ENCODE measurements at regions of chr5 and their contacts with region 1.

Region 1: DNA sequence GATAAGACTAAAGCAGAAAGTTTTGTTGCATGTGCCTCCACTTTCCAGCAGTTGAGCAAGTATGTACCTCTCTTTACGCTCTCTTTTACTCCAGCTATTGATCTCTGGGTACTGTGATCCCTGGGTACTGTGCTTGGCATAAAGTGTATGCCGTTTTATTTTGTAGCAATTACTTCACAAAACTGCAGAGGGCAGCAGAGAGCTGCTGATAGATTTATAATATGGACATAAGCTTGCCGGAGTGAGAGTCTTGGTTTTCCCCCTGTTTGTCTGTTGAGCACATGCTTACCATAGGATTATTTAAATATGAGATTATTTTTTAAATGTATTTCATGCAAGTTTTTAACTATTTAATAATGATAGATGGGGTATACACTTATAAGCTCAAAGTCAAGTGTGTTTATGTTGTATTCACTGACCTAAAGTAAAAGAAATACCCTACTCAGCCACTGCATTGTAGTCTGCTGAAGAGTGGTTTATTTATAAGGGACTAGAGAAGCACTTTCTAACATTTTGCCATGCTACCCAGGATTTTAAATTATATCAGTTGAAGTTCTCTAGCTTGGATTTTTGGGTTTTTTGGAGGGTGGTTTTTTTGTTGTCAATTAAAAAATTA is 13.0 kb downstream of the TTC1 start:
- DNase-seq: peak in 4 of 5 donors; percentile 31 to 65 (median 37)
- H3K4me3 ChIP-seq: no peak overlapping the region
- H3K27ac ChIP-seq: no peak overlapping the region
- H3K4me1 ChIP-seq: peaks cover 1% of the 10 kb centered on the region
- H3K27me3 ChIP-seq: no peaks in the 10 kb centered on the region
- CTCF ChIP-seq: peak; percentile 55 to 81 (median 72)
- EP300 ChIP-seq: no peak
- POLR2A ChIP-seq: no peak

Region 2: DNA sequence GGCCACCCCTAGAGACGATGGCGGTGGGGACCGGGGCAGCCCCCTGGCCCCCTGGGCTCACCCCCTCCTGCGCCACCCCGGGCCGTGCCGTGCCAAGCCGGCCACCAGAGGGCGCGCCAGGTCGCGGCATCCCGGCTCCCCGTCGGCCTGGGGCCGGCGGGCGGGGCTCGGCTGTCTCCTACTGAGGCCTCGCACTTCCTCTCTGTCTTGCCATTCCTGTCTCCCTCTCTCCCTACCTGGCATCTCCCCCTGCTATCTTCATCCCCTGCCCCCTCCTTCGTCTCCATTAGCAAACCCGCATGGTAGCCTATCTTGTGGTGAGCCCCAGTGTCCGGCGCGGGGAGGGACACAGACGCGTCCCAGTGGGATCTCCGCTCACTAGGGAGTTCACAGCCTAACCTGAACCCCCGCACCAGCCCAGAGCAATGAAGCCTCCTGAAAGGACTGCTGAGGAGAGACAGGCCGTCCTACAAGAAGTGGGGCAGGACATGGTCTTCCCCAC is 177.5 kb after region 1 on chr5:
- intact Hi-C with region 1: loop called in 3 of 4 experiments (anchors 5 to 10 kb)
- DNase-seq: peak; percentile 68 to 87 (median 80)
- H3K4me3 ChIP-seq: peak overlapping the region; percentile 28
- H3K27ac ChIP-seq: no peak overlapping the region
- H3K4me1 ChIP-seq: peaks cover 1% of the 10 kb centered on the region
- H3K27me3 ChIP-seq: no peaks in the 10 kb centered on the region
- CTCF ChIP-seq: peak; percentile 83 to 95 (median 93)
- EP300 ChIP-seq: no peak
- POLR2A ChIP-seq: no peak

Region 3: DNA sequence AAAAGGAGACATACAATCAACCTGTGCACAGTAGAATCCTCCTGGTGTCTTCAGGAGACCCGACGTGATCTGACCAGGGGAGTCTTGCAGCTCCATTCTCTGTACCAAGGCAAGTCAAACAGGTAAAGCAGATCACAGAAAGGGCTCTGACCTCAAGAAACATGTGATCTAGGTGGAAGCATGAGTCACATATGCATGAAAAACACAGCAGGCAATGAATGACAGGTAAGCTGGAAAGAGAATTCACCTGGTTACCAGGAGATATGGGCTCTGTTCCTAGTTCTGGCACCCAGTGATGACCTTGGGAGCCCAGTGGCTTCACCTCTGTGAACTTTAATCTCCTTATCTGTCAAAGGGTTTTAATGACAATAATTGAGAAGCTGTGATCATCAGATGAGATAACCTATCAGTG is 188.0 kb after region 1 on chr5:
- intact Hi-C with region 1: loop called in 1 of 4 experiments (anchors 10 kb)
- DNase-seq: no peak
- H3K4me3 ChIP-seq: no peak overlapping the region
- H3K27ac ChIP-seq: no peak overlapping the region
- H3K4me1 ChIP-seq: no peaks in the 10 kb centered on the region
- H3K27me3 ChIP-seq: no peaks in the 10 kb centered on the region
- CTCF ChIP-seq: no peak
- EP300 ChIP-seq: no peak
- POLR2A ChIP-seq: no peak

Region 4: GRCh38 chr5:160342403-160342941 is 320.5 kb after region 1 on chr5:
- intact Hi-C with region 1: loop called (anchors 2 to 5 kb)
- DNase-seq: peak; percentile 38 to 64 (median 49)
- H3K4me3 ChIP-seq: no peak overlapping the region
- H3K27ac ChIP-seq: peak overlapping the region in 1 of 2 donors; percentile 79
- H3K4me1 ChIP-seq: peaks cover 16% of the 10 kb centered on the region
- H3K27me3 ChIP-seq: no peaks in the 10 kb centered on the region
- CTCF ChIP-seq: no peak
- EP300 ChIP-seq: no peak
- POLR2A ChIP-seq: no peak

Region 5: GRCh38 chr5:160390787-160391696 is 369.1 kb after region 1 on chr5:
- intact Hi-C with region 1: loop called in 1 of 4 experiments (anchors 5 kb)
- DNase-seq: no peak
- H3K4me3 ChIP-seq: no peak overlapping the region
- H3K27ac ChIP-seq: no peak overlapping the region
- H3K4me1 ChIP-seq: no peaks in the 10 kb centered on the region
- H3K27me3 ChIP-seq: no peaks in the 10 kb centered on the region
- CTCF ChIP-seq: peak in 1 of 3 donors; percentile 56
- EP300 ChIP-seq: no peak
- POLR2A ChIP-seq: no peak